Activated CD4-positive, alpha-beta T cell treated with anti-CD3 and anti-CD28 coated beads, Interleukin-2, amount 10 ng/mL, durations not matched to agents 7 days and 5 days (primary cell): ENCODE measurements at regions of chr3 and their contacts with region 1.

Region 1: GRCh38 chr3:48247401-48247811 is 6.5 kb downstream of the ZNF589 start:
- DNase-seq: no peak
- H3K4me3 Mint-ChIP-seq: peak overlapping the region; percentile 25
- H3K27ac Mint-ChIP-seq: peak overlapping the region; percentile 79
- H3K4me1 Mint-ChIP-seq: peaks cover 44% of the 10 kb centered on the region
- H3K27me3 Mint-ChIP-seq: no peaks in the 10 kb centered on the region

Region 2: GRCh38 chr3:47634996-47635395 is 612.4 kb before region 1 on chr3:
- CTCF ChIA-PET with region 1: no interaction called
- POLR2A ChIA-PET with region 1: no interaction called
- DNase-seq: no peak
- H3K4me3 Mint-ChIP-seq: no peak overlapping the region
- H3K27ac Mint-ChIP-seq: no peak overlapping the region
- H3K4me1 Mint-ChIP-seq: peaks cover 5% of the 10 kb centered on the region
- H3K27me3 Mint-ChIP-seq: no peaks in the 10 kb centered on the region

Region 3: DNA sequence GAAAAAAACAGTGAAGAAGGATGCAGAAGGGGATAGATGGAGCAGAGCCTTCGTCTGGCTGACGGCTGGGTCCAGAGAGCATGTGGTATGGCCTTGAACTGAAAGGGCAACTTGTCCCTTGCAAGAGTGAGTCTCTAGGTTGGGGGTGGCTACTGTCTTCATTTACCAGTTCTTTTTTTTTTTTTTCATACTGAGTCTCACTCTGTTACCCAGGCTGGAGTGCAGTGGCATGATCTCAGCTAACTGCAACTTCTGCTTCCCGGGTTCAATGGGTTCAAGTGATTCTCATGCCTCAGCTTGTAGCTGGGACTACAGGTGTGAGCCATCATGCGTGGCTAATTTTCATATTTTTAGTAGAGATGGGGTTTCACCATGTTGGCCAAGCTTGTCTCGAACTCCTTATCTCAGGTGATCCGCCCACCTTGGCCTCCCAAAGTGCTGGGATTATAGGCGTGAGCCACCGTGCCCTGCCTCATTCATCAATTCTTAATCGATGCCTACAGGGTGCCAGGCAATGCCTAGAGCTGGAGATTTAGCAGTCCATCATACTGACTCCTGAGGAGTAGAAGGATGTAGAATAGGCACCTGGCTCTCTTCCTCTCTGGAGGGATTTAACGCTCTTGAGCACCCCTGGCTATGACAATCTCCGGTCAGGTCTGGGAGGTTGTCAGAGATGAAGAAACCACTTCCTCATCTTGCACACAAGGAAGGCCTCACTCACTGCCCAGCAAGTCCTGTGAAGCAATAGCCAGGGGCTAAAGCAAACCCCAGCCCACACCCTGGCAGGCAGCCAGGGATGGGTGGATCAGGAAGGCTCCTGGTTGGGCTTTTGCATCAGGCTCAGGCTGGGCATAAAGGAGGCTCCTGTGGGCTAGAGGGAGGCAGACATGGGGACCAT is 24.5 kb before region 1 on chr3 and contains the start of gene CAMP:
- CTCF ChIA-PET with region 1: no interaction called
- POLR2A ChIA-PET with region 1: no interaction called
- DNase-seq: no peak
- H3K4me3 Mint-ChIP-seq: no peak within 1 kb of the TSS
- H3K27ac Mint-ChIP-seq: no peak within 1 kb of the TSS
- H3K4me1 Mint-ChIP-seq: peaks cover 6% of the 10 kb centered on the region
- H3K27me3 Mint-ChIP-seq: no peaks in the 10 kb centered on the region
- total RNA-seq, gene CAMP: not detected

Region 4: DNA sequence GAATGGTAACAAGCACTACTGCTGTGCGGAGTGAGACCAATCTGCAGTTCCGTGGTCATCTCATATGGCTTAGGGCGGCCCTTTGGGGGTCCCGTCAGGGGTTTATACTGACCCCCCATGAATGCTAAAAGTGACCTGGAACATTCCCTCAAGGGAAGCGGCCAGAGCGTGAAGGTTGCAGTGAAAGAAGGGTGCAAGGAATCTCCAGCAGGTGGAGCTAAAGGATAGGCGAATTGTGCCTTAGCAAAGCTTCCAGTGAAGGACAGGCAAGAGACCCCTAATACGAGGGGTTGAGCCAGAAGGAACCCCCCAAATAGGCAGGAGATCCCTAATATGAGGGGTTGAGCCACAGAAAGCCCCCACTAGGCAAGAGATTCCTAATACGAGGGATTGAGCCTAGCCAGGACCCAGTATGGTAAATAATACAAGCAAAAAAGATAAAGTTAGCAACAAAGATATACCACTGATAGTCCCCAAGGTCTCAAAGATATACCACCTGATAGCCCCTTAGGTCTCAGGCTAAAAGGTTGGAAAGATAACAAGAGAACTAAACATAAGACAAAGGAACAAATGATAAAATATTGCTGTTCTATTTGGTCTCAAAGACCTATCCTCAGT is 26.3 kb after region 1 on chr3:
- CTCF ChIA-PET with region 1: interaction called, 14 read pairs
- POLR2A ChIA-PET with region 1: no interaction called
- DNase-seq: peak; percentile 67
- H3K4me3 Mint-ChIP-seq: no peak overlapping the region
- H3K27ac Mint-ChIP-seq: no peak overlapping the region
- H3K4me1 Mint-ChIP-seq: peaks cover 20% of the 10 kb centered on the region
- H3K27me3 Mint-ChIP-seq: no peaks in the 10 kb centered on the region

Region 5: GRCh38 chr3:48472915-48473616 is 225.7 kb after region 1 on chr3:
- CTCF ChIA-PET with region 1: no interaction called
- POLR2A ChIA-PET with region 1: no interaction called
- DNase-seq: peak; percentile 98
- H3K4me3 Mint-ChIP-seq: peak overlapping the region; percentile 84
- H3K27ac Mint-ChIP-seq: peak overlapping the region; percentile 98
- H3K4me1 Mint-ChIP-seq: peaks cover 73% of the 10 kb centered on the region
- H3K27me3 Mint-ChIP-seq: no peaks in the 10 kb centered on the region